Ovary (tissue), 10 donors: ENCODE measurements at regions of chr1 and their contacts with region 1.

Region 1: DNA sequence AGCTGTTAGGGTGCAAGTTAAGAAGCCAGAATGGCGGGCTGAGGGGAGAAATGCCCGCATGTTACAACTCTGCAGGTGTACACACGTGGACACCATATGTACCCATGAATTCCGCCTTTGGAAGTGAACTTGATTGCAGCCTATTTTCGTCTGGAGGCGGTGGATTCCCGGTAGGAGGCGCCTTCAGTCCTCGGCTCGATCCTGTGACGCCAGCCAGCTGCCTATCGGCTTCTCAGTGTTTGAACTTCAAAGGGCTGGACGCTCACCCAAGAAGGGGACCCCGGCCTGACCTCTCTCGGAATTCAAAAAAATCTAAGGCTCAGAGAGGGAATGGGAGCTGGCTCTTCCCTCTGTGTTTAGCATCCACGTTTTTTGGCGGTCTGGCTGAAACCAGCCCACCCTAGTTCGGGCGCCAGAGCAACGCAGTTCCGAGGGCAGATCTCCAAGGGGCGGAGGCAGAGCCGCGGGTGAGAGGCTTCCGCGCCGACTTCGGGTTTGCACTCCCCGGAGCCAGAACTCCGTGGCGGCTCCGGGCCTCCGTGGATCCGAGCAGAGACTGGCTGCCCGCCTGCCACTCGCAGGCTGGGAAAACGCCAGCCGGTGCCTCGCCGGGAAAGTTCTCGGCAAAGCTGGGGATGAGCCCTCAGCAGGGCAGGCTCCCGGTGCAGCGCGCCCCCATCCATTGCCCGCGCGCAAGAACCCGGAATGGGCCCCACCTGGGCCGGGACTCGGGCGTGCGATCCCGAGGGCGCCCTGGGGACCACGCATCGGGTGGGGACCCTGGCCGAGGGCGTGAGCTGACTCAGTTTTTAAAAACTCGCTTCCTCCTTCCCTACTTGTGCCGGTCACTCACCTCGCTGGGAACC is 996 bp upstream of the TMEM51 start:
- DNase-seq: peak; percentile 92 to 94 (median 93)
- H3K4me3 ChIP-seq: peak overlapping the region; percentile 55
- H3K27ac ChIP-seq: peak overlapping the region; percentile 84 to 94
- H3K4me1 ChIP-seq: peaks cover 21% of the 10 kb centered on the region
- H3K27me3 ChIP-seq: no peaks in the 10 kb centered on the region
- CTCF ChIP-seq: peak; percentile 72 to 78 (median 78)
- EP300 ChIP-seq: no peak
- POLR2A ChIP-seq: peak; percentile 52

Region 2: DNA sequence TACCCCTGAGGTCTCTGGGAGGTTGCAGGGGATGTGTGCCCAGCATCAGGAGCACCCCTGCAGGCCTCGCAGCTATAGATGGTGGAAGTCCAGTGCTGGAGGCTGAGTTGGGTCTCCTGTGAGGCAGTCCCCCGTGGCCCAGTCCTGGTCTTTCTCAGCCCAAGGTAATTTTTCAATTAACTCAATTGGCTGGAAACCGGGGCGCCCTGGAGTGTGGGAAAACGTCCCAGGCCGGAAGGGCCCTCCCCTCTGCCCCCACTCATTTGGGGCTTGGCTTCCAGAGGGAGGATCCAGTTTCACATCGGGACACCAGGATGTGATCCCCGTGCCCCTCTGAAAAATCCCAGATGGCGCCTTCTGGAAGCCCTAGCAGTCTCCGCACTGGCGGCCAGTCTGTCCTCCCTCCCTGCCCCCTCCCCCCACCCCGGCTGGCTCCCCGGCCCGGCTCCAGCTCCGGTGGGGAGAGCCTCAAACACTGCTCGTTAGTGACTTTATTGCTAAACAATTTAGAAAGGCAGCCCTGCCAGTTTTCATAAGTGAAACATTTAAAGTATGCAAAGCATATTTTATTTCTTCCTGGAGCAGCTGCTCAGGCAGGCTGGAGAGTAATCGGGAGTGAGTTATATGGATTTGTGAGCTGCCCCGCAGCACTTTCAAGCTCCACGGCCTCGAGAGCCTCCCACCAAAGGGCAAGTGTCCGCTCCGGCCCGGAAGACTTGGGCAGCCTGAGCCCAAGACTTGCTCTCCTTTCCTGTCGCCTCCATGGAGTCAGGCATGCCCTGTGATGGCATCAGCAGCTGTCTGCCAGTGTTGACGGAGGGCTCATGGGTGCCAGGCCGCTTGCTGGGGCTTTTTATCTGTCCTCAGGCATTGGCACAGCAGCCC is 207.2 kb before region 1 on chr1:
- intact Hi-C with region 1: no loop called
- DNase-seq: peak; percentile 73 to 86 (median 79)
- H3K4me3 ChIP-seq: peak overlapping the region; percentile 19
- H3K27ac ChIP-seq: peak overlapping the region; percentile 51 to 56
- H3K4me1 ChIP-seq: peaks cover 34% of the 10 kb centered on the region
- H3K27me3 ChIP-seq: no peaks in the 10 kb centered on the region
- CTCF ChIP-seq: no peak
- EP300 ChIP-seq: no peak
- POLR2A ChIP-seq: no peak

Region 3: DNA sequence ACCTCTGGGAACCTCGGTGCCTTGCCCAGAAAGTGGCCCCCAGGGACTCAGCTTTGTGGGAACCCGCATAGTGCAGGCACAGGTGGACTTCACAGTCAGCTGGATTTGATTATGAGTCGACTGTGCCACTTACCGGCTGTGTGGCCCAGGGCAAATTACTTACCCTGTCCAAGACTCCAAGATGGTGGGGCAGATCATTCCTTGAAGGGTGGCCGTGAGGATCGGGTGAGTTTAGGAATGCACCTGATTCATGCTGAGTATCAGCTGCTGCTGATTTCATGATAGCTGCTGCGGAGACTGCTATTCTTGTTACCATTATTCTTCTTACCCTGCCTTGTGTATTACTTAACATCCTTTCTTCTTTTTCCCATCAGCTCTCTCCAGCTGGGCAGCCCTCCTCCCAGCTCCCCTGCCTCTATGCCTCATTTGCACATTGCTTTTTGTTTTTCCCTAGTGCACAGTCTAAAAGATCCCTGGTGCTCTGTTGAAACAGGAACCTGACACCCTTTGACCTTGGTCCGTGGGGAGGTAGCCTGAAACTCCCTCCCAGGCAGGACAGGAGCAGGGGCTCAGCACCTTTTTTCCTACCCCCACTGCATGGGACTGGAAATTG is 54.0 kb after region 1 on chr1:
- intact Hi-C with region 1: loop called in 3 of 4 experiments (anchors 5 to 10 kb)
- DNase-seq: peak in 1 of 5 donors; percentile 23
- H3K4me3 ChIP-seq: no peak overlapping the region
- H3K27ac ChIP-seq: no peak overlapping the region
- H3K4me1 ChIP-seq: peaks cover 13% of the 10 kb centered on the region
- H3K27me3 ChIP-seq: no peaks in the 10 kb centered on the region
- CTCF ChIP-seq: no peak
- EP300 ChIP-seq: no peak
- POLR2A ChIP-seq: no peak

Region 4: DNA sequence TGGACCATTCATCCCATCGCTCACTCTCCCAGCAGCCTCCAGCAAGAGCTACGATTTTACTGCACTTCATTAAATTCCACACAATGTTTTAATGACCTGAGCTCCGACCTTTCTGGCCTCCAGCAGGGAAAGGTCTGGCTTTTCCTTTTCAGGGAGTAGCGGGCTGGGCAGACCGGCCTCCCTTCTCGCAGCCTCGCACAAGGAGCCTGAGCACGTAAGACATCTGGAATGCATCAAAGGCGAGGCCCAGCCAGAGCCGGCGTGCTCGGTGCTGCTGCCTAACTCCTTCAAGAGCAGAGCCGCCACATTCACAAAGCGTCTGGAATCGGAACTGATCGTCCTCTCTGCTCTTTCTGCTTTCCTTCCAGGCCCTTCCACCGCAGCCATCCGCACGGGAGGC is 62.0 kb after region 1 on chr1:
- intact Hi-C with region 1: loop called in 3 of 4 experiments (anchors 5 to 10 kb)
- DNase-seq: peak; percentile 81 to 91 (median 83)
- H3K4me3 ChIP-seq: no peak overlapping the region
- H3K27ac ChIP-seq: peak overlapping the region; percentile 26 to 86
- H3K4me1 ChIP-seq: peaks cover 37% of the 10 kb centered on the region
- H3K27me3 ChIP-seq: no peaks in the 10 kb centered on the region
- CTCF ChIP-seq: no peak
- EP300 ChIP-seq: no peak
- POLR2A ChIP-seq: no peak

Region 5: GRCh38 chr1:15261155-15262002 is 108.8 kb after region 1 on chr1:
- intact Hi-C with region 1: loop called in 1 of 4 experiments (anchors 5 kb)
- DNase-seq: peak in 1 of 5 donors; percentile 30
- H3K4me3 ChIP-seq: no peak overlapping the region
- H3K27ac ChIP-seq: peak overlapping the region in 1 of 2 donors; percentile 49
- H3K4me1 ChIP-seq: peaks cover 15% of the 10 kb centered on the region
- H3K27me3 ChIP-seq: no peaks in the 10 kb centered on the region
- CTCF ChIP-seq: no peak
- EP300 ChIP-seq: no peak
- POLR2A ChIP-seq: no peak

Region 6: DNA sequence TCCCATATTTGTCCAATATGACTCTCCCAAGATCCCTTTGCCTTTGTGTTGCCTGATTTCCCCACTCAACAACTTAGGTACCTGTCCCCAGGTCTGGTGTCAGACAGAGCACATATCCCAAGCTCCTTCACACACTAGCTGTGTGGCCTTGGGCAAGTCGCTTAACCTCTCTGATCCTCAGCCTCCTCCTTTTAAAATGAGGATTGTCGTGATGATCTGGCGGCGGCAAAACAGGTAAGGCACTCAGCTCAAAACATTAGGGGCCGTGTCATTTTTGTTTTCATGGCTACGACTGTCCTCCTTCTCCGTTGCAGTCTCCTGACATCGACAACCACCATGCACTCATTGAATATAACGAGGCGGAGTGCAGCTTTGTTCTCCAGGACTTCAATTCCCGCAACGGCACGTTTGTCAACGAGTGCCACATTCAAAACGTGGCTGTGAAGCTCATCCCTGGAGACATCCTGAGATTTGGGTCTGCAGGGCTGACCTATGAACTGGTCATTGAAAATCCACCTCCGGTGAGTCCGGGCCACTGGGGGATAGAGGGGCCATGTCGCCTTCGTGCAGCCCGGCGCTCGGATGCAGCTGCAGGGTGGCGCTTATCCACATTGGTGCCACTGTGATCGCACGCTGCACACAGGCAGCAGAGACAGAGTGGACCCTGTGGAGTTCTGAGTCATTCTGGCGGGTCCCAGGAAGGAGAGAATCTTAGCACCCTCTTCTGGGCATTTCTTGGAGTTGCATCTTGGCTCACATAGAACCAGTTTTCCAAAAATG is 119.6 kb after region 1 on chr1:
- intact Hi-C with region 1: loop called (anchors 2 to 5 kb)
- DNase-seq: peak; percentile 58 to 75 (median 63)
- H3K4me3 ChIP-seq: no peak overlapping the region
- H3K27ac ChIP-seq: no peak overlapping the region
- H3K4me1 ChIP-seq: peaks cover 1% of the 10 kb centered on the region
- H3K27me3 ChIP-seq: no peaks in the 10 kb centered on the region
- CTCF ChIP-seq: peak; percentile 44 to 84 (median 80)
- EP300 ChIP-seq: no peak
- POLR2A ChIP-seq: no peak